ENCODE measurements at regions of chr1 and their contacts with region 1.

Region 1: GRCh38 chr1:78607334-78607927 is 12.8 kb upstream of the IFI44L start:
- DNase-seq: no peak
- ATAC-seq: no peak
- H3K4me3 Mint-ChIP-seq: no peak overlapping the region
- H3K27ac Mint-ChIP-seq: no peak overlapping the region
- H3K4me1 Mint-ChIP-seq: no peaks in the 10 kb centered on the region
- H3K27me3 Mint-ChIP-seq: peaks cover 31% of the 10 kb centered on the region

Region 2: GRCh38 chr1:78145105-78145580 is 462.3 kb before region 1 on chr1:
- CTCF ChIA-PET with region 1: interaction called, 32 read pairs
- DNase-seq: peak; percentile 67
- ATAC-seq: peak; percentile 75
- H3K4me3 Mint-ChIP-seq: no peak overlapping the region
- H3K27ac Mint-ChIP-seq: no peak overlapping the region
- H3K4me1 Mint-ChIP-seq: peaks cover 24% of the 10 kb centered on the region
- H3K27me3 Mint-ChIP-seq: peaks cover 11% of the 10 kb centered on the region

Measured in activated CD8-positive, alpha-beta memory T cell treated with anti-CD3 and anti-CD28 coated beads, Interleukin-2, amount 10 ng/mL, durations not matched to agents 7 days and 5 days (primary cell).